ENCODE measurements at regions of chr3 and their contacts with region 1.

Region 1: GRCh38 chr3:183766745-183767606 is 58.4 kb downstream of the MAP6D1 start:
- DNase-seq: no peak
- H3K4me3 ChIP-seq: no peak overlapping the region
- H3K27ac ChIP-seq: no peak overlapping the region
- H3K4me1 ChIP-seq: peaks cover 0 to 21% (median 16%) of the 10 kb centered on the region in 4 donors
- H3K27me3 ChIP-seq: no peaks in the 10 kb centered on the region
- CTCF ChIP-seq: peak; percentile 72 to 83 (median 77)
- EP300 ChIP-seq: no peak
- POLR2A ChIP-seq: no peak

Region 2: GRCh38 chr3:183468424-183468823 is 298.6 kb before region 1 on chr3:
- intact Hi-C with region 1: loop called (anchors 1 kb)
- DNase-seq: no peak
- H3K4me3 ChIP-seq: no peak overlapping the region
- H3K27ac ChIP-seq: no peak overlapping the region
- H3K4me1 ChIP-seq: peaks cover 0 to 8% (median 3%) of the 10 kb centered on the region in 4 donors
- H3K27me3 ChIP-seq: peaks cover 0 to 4% (median 0%) of the 10 kb centered on the region in 4 donors
- CTCF ChIP-seq: no peak
- EP300 ChIP-seq: no peak
- POLR2A ChIP-seq: no peak